ENCODE measurements at regions of chr18 and their contacts with region 1.

Region 1: GRCh38 chr18:6441200-6441599 is 26.5 kb upstream of the L3MBTL4 start:
- DNase-seq: no peak
- ATAC-seq: no peak; the same call in 1 of the 2 replicates
- H3K4me3 ChIP-seq: no peak overlapping the region
- H3K27ac ChIP-seq: no peak overlapping the region
- H3K4me1 ChIP-seq: no peaks in the 10 kb centered on the region
- H3K27me3 ChIP-seq: no peaks in the 10 kb centered on the region; the same call in 1 of the 2 replicates
- CTCF ChIP-seq: no peak
- POLR2A ChIP-seq: no peak
- RAD21 ChIP-seq: no peak

Region 2: GRCh38 chr18:5180254-5180653 is 1260.9 kb before region 1 on chr18:
- CTCF ChIA-PET with region 1: no interaction called
- POLR2A ChIA-PET with region 1: no interaction called
- dilution Hi-C with region 1: no loop called
- in situ Hi-C with region 1: no loop called
- intact Hi-C with region 1: no loop called
- DNase-seq: no peak
- ATAC-seq: no peak
- H3K4me3 ChIP-seq: no peak overlapping the region
- H3K27ac ChIP-seq: no peak overlapping the region
- H3K4me1 ChIP-seq: no peaks in the 10 kb centered on the region
- H3K27me3 ChIP-seq: no peaks in the 10 kb centered on the region
- CTCF ChIP-seq: no peak
- POLR2A ChIP-seq: no peak
- RAD21 ChIP-seq: no peak

Region 3: GRCh38 chr18:6336239-6336638 is 105.0 kb before region 1 on chr18:
- CTCF ChIA-PET with region 1: no interaction called
- POLR2A ChIA-PET with region 1: no interaction called
- dilution Hi-C with region 1: no loop called
- in situ Hi-C with region 1: no loop called
- intact Hi-C with region 1: loop called (anchors 5 kb)
- DNase-seq: no peak
- ATAC-seq: no peak
- H3K4me3 ChIP-seq: no peak overlapping the region
- H3K27ac ChIP-seq: no peak overlapping the region
- H3K4me1 ChIP-seq: no peaks in the 10 kb centered on the region
- H3K27me3 ChIP-seq: no peaks in the 10 kb centered on the region
- CTCF ChIP-seq: no peak
- POLR2A ChIP-seq: no peak
- RAD21 ChIP-seq: no peak

Region 4: GRCh38 chr18:6355789-6356589 is 85.2 kb before region 1 on chr18:
- CTCF ChIA-PET with region 1: no interaction called
- POLR2A ChIA-PET with region 1: no interaction called
- dilution Hi-C with region 1: no loop called
- in situ Hi-C with region 1: no loop called
- intact Hi-C with region 1: no loop called
- DNase-seq: peak; percentile 40
- ATAC-seq: peak; percentile 32
- H3K4me3 ChIP-seq: no peak overlapping the region
- H3K27ac ChIP-seq: no peak overlapping the region
- H3K4me1 ChIP-seq: no peaks in the 10 kb centered on the region
- H3K27me3 ChIP-seq: no peaks in the 10 kb centered on the region
- CTCF ChIP-seq: no peak
- POLR2A ChIP-seq: no peak
- RAD21 ChIP-seq: no peak

Region 5: DNA sequence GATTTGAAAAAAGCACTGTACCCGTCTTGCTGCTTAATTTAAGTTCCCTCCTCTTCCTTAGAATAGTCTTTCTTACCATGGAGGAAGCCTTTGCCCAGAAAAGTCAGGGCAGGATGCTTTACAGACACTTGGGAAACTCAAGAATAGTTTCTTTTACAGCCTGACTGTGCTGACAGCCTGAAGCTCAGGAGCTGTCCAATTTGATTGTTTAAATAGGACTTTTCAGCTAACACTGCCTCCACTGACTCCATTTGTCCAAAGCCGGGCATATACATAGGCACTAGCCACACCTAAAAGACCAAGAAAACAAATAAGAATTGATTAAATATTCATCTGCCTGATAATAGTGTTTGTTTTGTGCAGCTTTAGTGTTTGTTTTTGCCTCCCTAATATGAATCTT is 84.4 kb after region 1 on chr18:
- CTCF ChIA-PET with region 1: no interaction called
- POLR2A ChIA-PET with region 1: no interaction called
- dilution Hi-C with region 1: no loop called
- in situ Hi-C with region 1: no loop called
- intact Hi-C with region 1: no loop called
- DNase-seq: no peak
- ATAC-seq: no peak
- H3K4me3 ChIP-seq: no peak overlapping the region
- H3K27ac ChIP-seq: no peak overlapping the region
- H3K4me1 ChIP-seq: no peaks in the 10 kb centered on the region
- H3K27me3 ChIP-seq: no peaks in the 10 kb centered on the region
- CTCF ChIP-seq: no peak
- POLR2A ChIP-seq: no peak
- RAD21 ChIP-seq: no peak

Measured in IMR-90 (cell line).